PC-3 (cell line): ENCODE measurements at regions of chr12 and their contacts with region 1.

Region 1: DNA sequence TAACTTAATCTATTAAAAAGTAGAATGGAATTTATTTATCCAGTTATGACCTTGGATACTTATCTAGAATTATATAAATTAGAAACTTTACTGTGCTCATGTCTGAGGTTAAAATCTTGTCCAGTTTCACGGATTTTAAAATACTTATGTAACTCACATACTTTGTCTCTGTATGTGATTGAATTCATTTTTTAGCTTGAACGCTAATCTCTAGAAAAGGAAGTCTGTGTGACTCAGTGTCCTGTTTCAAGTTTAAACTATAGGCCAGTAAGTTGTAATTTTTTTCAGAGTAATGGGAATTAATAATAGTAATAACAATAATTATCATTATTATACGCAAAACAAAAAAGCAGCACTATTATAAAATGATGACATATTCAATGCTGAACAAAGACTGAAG is 168.6 kb downstream of the CPNE8 start:
- DNase-seq: no peak
- ATAC-seq: no peak
- H3K4me3 ChIP-seq: no peak overlapping the region
- H3K27ac ChIP-seq: no peak overlapping the region
- H3K4me1 ChIP-seq: no peaks in the 10 kb centered on the region
- H3K27me3 ChIP-seq: no peaks in the 10 kb centered on the region
- CTCF ChIP-seq: no peak

Region 2: GRCh38 chr12:38892090-38892786 is 155.4 kb after region 1 on chr12:
- CTCF ChIA-PET with region 1: no interaction called
- POLR2A ChIA-PET with region 1: no interaction called
- intact Hi-C with region 1: loop called (anchors 10 kb)
- DNase-seq: no peak
- ATAC-seq: no peak
- H3K4me3 ChIP-seq: no peak overlapping the region
- H3K27ac ChIP-seq: no peak overlapping the region
- H3K4me1 ChIP-seq: peaks cover 3% of the 10 kb centered on the region; the same call in 1 of the 2 replicates
- H3K27me3 ChIP-seq: no peaks in the 10 kb centered on the region
- CTCF ChIP-seq: no peak